Mucosa of descending colon (tissue), 3 donors: ENCODE measurements at regions of chr6 and their contacts with region 1.

Region 1: GRCh38 chr6:150079604-150080003 is 10.7 kb upstream of the ULBP3 start:
- DNase-seq: no peak
- ATAC-seq: no peak
- H3K4me3 ChIP-seq: no peak overlapping the region
- H3K4me1 ChIP-seq: no peaks in the 10 kb centered on the region
- CTCF ChIP-seq: no peak

Region 2: GRCh38 chr6:149423964-149424440 is 655.6 kb before region 1 on chr6:
- intact Hi-C with region 1: no loop called
- DNase-seq: no peak
- ATAC-seq: no peak
- H3K4me3 ChIP-seq: no peak overlapping the region
- H3K4me1 ChIP-seq: peaks cover 3% of the 10 kb centered on the region
- CTCF ChIP-seq: no peak

Region 3: GRCh38 chr6:150334790-150335783 is 255.5 kb after region 1 on chr6:
- intact Hi-C with region 1: loop called (anchors 5 kb)
- DNase-seq: peak in 1 of 3 donors; percentile 79
- ATAC-seq: peak; percentile 57
- H3K4me3 ChIP-seq: no peak overlapping the region
- H3K4me1 ChIP-seq: no peaks in the 10 kb centered on the region
- CTCF ChIP-seq: peak; percentile 30

Region 4: DNA sequence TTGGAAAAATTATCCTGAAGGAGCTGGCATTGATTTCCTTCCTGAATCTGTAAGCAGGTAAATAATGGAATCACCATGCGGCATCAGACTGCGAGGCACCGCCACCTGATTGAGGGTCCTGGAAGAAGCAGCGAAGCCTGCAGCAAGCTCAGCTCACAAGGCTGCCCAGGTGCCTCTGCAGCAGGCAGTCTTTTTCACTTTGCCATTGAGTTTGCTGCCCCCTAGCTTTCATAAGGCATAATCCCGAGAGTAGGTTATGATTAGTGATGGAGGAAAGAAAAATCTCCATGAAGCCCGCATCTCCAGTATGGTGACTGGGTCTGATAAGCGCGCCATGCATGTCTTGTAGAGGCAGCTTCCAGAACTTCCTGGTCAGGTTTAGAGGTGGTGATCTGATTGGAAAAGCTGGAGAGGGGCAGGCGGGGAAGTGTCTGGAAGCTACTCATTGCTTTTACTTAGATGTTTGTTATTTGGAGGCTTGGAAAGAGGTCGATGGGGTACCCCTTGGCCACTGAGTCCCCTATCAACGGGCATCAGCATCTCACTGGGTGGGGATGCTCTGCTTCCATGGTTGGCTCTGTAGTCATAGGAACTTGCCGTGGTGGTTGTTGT is 315.9 kb after region 1 on chr6:
- intact Hi-C with region 1: loop called (anchors 5 to 10 kb)
- DNase-seq: peak in 2 of 3 donors; percentile 39 to 72
- ATAC-seq: peak; percentile 85
- H3K4me3 ChIP-seq: no peak overlapping the region
- H3K4me1 ChIP-seq: no peaks in the 10 kb centered on the region
- CTCF ChIP-seq: peak; percentile 51